ENCODE measurements at regions of chr12 and their contacts with region 1.

Region 1: DNA sequence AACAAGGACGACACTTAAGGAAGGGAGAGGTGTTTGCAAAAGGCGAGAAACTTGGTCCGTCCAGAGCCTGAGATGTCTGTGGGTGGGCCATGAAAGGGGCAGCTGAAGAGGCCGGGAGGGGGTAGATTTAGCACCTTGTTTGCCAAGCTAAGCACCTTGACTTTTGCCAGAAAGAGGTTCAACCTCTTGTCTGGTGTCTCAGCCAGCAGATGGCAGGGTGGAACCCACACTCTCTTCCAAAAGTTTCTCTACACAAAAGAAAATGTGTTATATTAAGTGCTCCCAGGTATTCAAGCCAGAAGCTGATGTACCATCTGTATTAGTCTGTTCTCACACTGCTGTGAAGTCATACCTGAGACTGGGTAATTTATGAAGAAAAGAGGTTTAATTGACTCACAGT is 69.9 kb downstream of the SUDS3 start:
- DNase-seq: no peak
- ATAC-seq: no peak

Region 2: GRCh38 chr12:118608770-118609344 is 162.6 kb after region 1 on chr12:
- intact Hi-C with region 1: loop called in 1 of 2 experiments (anchors 5 kb)
- DNase-seq: no peak
- ATAC-seq: no peak

Measured in left cardiac atrium (tissue), 4 donors.